ENCODE measurements at regions of chr7 and their contacts with region 1.

Region 1: GRCh38 chr7:41573018-41573417 is 129.9 kb downstream of the INHBA start:
- DNase-seq: no peak
- ATAC-seq: no peak
- H3K4me3 ChIP-seq: no peak overlapping the region
- H3K27ac ChIP-seq: no peak overlapping the region
- H3K4me1 ChIP-seq: no peaks in the 10 kb centered on the region
- H3K27me3 ChIP-seq: no peaks in the 10 kb centered on the region
- CTCF ChIP-seq: no peak
- POLR2A ChIP-seq: no peak

Region 2: GRCh38 chr7:41529831-41530230 is 43.2 kb before region 1 on chr7:
- in situ Hi-C with region 1: no loop called
- intact Hi-C with region 1: no loop called
- DNase-seq: no peak
- ATAC-seq: no peak
- H3K4me3 ChIP-seq: no peak overlapping the region
- H3K27ac ChIP-seq: no peak overlapping the region
- H3K4me1 ChIP-seq: no peaks in the 10 kb centered on the region
- H3K27me3 ChIP-seq: no peaks in the 10 kb centered on the region
- CTCF ChIP-seq: no peak
- POLR2A ChIP-seq: no peak

Region 3: DNA sequence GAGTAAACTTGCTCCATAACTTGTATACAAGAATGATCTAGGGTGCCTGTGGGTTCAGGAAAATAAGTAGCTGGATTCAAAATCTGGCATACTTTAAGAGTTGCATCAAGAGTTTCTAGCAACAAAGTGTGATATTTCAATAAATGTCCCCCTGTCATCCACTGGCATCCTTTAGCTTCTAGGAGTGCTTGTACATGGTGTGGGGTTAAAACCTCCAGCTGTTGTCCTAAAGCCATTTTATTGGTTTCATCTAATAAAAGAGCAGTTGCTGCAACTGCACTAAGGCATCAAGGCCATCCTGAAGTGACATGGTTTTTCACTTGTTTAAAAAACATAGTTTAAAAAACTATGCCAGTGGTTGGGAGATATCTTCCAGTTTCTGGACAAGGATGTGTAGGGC is 18.5 kb before region 1 on chr7:
- in situ Hi-C with region 1: no loop called
- intact Hi-C with region 1: loop called (anchors 1 kb)
- DNase-seq: no peak
- ATAC-seq: no peak
- H3K4me3 ChIP-seq: no peak overlapping the region
- H3K27ac ChIP-seq: no peak overlapping the region
- H3K4me1 ChIP-seq: no peaks in the 10 kb centered on the region
- H3K27me3 ChIP-seq: no peaks in the 10 kb centered on the region
- CTCF ChIP-seq: no peak
- POLR2A ChIP-seq: no peak

Measured in gastrocnemius medialis (tissue), 4 donors.